Ovary (tissue), 10 donors: ENCODE measurements at regions of chr11 and their contacts with region 1.

Region 1: DNA sequence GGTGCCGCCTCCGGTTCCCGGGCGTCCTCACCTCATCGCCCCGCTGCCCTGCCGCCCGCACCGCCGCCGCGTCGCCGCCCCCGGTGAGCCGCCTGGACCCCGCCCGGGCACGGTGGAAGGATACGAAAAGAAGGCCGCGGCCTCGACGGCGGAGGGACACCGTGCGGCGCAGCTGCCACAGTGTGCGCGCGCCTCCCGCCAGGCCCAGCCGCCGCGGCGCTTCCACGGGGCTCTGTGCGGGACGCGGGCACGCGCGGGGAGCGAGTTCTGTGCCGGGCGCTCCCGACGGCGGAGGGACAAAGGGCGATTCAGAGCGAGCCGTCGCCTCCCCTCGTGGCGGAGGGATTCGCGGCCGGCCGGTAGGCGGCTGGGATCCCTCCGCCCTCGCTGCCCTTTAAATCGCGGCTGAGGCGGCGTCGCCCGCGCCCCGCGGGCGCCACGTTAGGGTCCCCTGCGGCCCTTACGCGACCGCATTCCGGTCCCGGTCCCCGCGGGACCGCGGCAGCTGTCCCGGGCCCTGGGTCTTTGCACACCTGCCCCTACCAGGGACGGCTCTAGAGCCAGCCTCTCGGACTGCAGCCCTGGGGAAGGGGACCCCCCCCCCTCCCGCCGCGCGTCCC is 569 bp upstream of the KMT5B start:
- DNase-seq: peak; percentile 90 to 94 (median 91)
- H3K4me3 ChIP-seq: peak overlapping the region; percentile 75
- H3K27ac ChIP-seq: peak overlapping the region; percentile 96 to 100
- H3K4me1 ChIP-seq: peaks cover 16% of the 10 kb centered on the region
- H3K27me3 ChIP-seq: no peaks in the 10 kb centered on the region
- CTCF ChIP-seq: peak in 2 of 3 donors; percentile 38 to 62
- EP300 ChIP-seq: no peak
- POLR2A ChIP-seq: peak; percentile 73

Region 2: GRCh38 chr11:68297812-68298658 is 84.4 kb after region 1 on chr11:
- intact Hi-C with region 1: loop called in 2 of 4 experiments (anchors 5 kb)
- DNase-seq: peak; percentile 67 to 89 (median 79)
- H3K4me3 ChIP-seq: no peak overlapping the region
- H3K27ac ChIP-seq: no peak overlapping the region
- H3K4me1 ChIP-seq: no peaks in the 10 kb centered on the region
- H3K27me3 ChIP-seq: no peaks in the 10 kb centered on the region
- CTCF ChIP-seq: peak; percentile 92 to 95 (median 93)
- EP300 ChIP-seq: no peak
- POLR2A ChIP-seq: no peak

Region 3: GRCh38 chr11:69489036-69489747 is 1275.5 kb after region 1 on chr11:
- intact Hi-C with region 1: no loop called
- DNase-seq: no peak
- H3K4me3 ChIP-seq: no peak overlapping the region
- H3K27ac ChIP-seq: no peak overlapping the region
- H3K4me1 ChIP-seq: no peaks in the 10 kb centered on the region
- H3K27me3 ChIP-seq: no peaks in the 10 kb centered on the region
- CTCF ChIP-seq: no peak
- EP300 ChIP-seq: no peak
- POLR2A ChIP-seq: no peak